HepG2 (cell line): ENCODE measurements at regions of chr12 and their contacts with region 1.

Region 1: DNA sequence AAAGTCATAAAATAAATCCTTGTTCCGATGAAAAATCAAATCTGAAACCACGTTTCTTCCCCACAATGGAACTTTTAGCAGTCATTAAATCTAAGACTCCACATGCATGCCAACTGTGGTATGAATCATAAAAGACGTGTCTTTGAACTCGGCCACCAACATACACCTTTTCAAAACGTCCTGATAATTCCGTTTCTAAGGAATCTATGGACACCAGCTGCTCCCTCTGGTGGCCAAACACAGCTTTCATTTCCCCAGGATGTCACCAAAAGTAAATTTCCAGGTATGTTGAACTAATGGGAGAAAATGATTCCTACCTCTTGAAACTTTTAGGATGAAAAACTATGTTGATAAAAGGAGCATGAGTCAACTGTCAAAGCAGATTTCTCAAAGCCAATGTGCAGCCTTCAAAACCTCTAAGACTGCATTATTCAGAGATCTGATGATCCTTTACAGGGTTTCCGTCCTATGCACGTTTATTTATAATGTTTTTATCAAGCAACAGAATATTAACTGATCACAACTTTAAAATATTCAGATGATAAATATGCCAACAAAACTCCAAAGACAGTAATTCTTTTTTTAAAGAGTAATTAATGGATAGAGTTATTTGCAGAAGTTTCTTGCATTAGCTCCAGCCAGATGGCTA is 96.2 kb downstream of the CIT start:
- DNase-seq: peak; percentile 37
- ATAC-seq: peak; percentile 46; the same call in 2 of the 3 replicates
- H3K4me3 ChIP-seq: no peak overlapping the region
- H3K27ac ChIP-seq: no peak overlapping the region
- H3K4me1 ChIP-seq: no peaks in the 10 kb centered on the region
- H3K27me3 ChIP-seq: no peaks in the 10 kb centered on the region
- CTCF ChIP-seq: peak; percentile 77
- EP300 ChIP-seq: no peak
- POLR2A ChIP-seq: no peak
- RAD21 ChIP-seq: peak; percentile 35; the same call in 1 of the 2 replicates

Region 2: GRCh38 chr12:119659289-119659897 is 121.5 kb before region 1 on chr12:
- CTCF ChIA-PET with region 1: interaction called, 10 read pairs
- POLR2A ChIA-PET with region 1: no interaction called
- in situ Hi-C with region 1: no loop called
- intact Hi-C with region 1: no loop called
- DNase-seq: peak; percentile 46
- ATAC-seq: no peak
- H3K4me3 ChIP-seq: no peak overlapping the region
- H3K27ac ChIP-seq: no peak overlapping the region
- H3K4me1 ChIP-seq: peaks cover 1% of the 10 kb centered on the region; the same call in 1 of the 2 replicates
- H3K27me3 ChIP-seq: no peaks in the 10 kb centered on the region
- CTCF ChIP-seq: peak; percentile 59
- EP300 ChIP-seq: no peak
- POLR2A ChIP-seq: no peak
- RAD21 ChIP-seq: no peak

Region 3: DNA sequence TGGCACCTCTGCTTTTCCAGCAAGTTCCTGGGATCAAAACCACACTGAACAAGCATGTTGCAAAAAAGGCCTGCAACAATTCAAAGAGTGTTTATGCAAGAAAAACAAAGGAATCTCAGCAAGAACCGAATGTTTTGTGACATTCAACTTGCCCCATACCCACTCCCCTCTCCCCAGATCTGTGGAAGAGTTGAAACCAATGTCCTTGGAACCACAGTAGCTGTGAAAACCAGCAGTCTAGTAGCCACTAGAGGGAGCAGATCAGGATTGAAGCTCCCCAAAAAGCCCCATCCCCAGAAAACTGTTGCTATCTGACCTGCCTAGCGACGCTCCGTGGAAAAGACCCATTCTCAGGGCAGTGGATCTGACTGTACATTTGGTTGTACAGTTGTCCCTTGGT is 85.9 kb before region 1 on chr12:
- CTCF ChIA-PET with region 1: interaction called, 7 read pairs
- POLR2A ChIA-PET with region 1: no interaction called
- in situ Hi-C with region 1: no loop called
- intact Hi-C with region 1: loop called (anchors 10 kb)
- DNase-seq: peak; percentile 23
- ATAC-seq: peak; percentile 62
- H3K4me3 ChIP-seq: no peak overlapping the region
- H3K27ac ChIP-seq: no peak overlapping the region
- H3K4me1 ChIP-seq: peaks cover 31% of the 10 kb centered on the region
- H3K27me3 ChIP-seq: no peaks in the 10 kb centered on the region
- CTCF ChIP-seq: peak; percentile 57
- EP300 ChIP-seq: no peak
- POLR2A ChIP-seq: no peak
- RAD21 ChIP-seq: no peak

Region 4: GRCh38 chr12:119876761-119877638 is 96.1 kb after region 1 on chr12 and contains the start of gene CIT:
- CTCF ChIA-PET with region 1: no interaction called
- POLR2A ChIA-PET with region 1: no interaction called
- in situ Hi-C with region 1: no loop called
- intact Hi-C with region 1: no loop called
- DNase-seq: peak; percentile 95
- ATAC-seq: peak; percentile 100
- H3K4me3 ChIP-seq: peak within 1 kb of the TSS; percentile 79 to 95 (median 93)
- H3K27ac ChIP-seq: peak within 1 kb of the TSS; percentile 51
- H3K4me1 ChIP-seq: peaks cover 22% of the 10 kb centered on the region
- H3K27me3 ChIP-seq: no peaks in the 10 kb centered on the region; a peak in 1 of 5 replicates
- CTCF ChIP-seq: no peak; the same call in 1 of the 2 replicates
- EP300 ChIP-seq: no peak
- POLR2A ChIP-seq: peak in 1 of 2 experiments; percentile 69; a peak in 3 of 4 replicates
- RAD21 ChIP-seq: 0 out of 2 replicates have a peak, but pooled peaks have one; percentile 23
- total RNA-seq, gene CIT: 11.7 and 14.7 TPM in 2 replicates

Region 5: GRCh38 chr12:119964929-119965328 is 184.0 kb after region 1 on chr12:
- CTCF ChIA-PET with region 1: no interaction called
- POLR2A ChIA-PET with region 1: no interaction called
- in situ Hi-C with region 1: no loop called
- intact Hi-C with region 1: no loop called
- DNase-seq: no peak
- ATAC-seq: no peak
- H3K4me3 ChIP-seq: no peak overlapping the region
- H3K27ac ChIP-seq: no peak overlapping the region
- H3K4me1 ChIP-seq: no peaks in the 10 kb centered on the region
- H3K27me3 ChIP-seq: peaks cover 0 to 10% of the 10 kb centered on the region in 2 experiments; a peak in 3 of 5 replicates
- CTCF ChIP-seq: no peak
- EP300 ChIP-seq: no peak
- POLR2A ChIP-seq: no peak
- RAD21 ChIP-seq: no peak